AG04450 (cell line): ENCODE measurements at regions of chrX and their contacts with region 1.

Region 1: GRCh38 chrX:17944833-17945497 is 83.9 kb upstream of the RAI2 start:
- DNase-seq: no peak
- H3K4me3 ChIP-seq: no peak overlapping the region
- H3K27ac ChIP-seq: no peak overlapping the region
- H3K27me3 ChIP-seq: no peaks in the 10 kb centered on the region
- CTCF ChIP-seq: peak; percentile 52

Region 2: GRCh38 chrX:18377796-18378195 is 432.8 kb after region 1 on chrX:
- CTCF ChIA-PET with region 1: interaction called, 15 read pairs
- POLR2A ChIA-PET with region 1: no interaction called
- DNase-seq: no peak
- H3K4me3 ChIP-seq: no peak overlapping the region
- H3K27ac ChIP-seq: no peak overlapping the region
- H3K27me3 ChIP-seq: peaks cover 2% of the 10 kb centered on the region
- CTCF ChIP-seq: peak; percentile 60